Tibial artery (tissue), 4 donors: ENCODE measurements at regions of chr18 and their contacts with region 1.

Region 1: GRCh38 chr18:60100778-60101177 is 201.0 kb downstream of the PMAIP1 start:
- DNase-seq: no peak
- H3K4me3 ChIP-seq: no peak overlapping the region
- H3K27ac ChIP-seq: no peak overlapping the region
- H3K4me1 ChIP-seq: no peaks in the 10 kb centered on the region
- H3K27me3 ChIP-seq: no peaks in the 10 kb centered on the region
- CTCF ChIP-seq: no peak

Region 2: DNA sequence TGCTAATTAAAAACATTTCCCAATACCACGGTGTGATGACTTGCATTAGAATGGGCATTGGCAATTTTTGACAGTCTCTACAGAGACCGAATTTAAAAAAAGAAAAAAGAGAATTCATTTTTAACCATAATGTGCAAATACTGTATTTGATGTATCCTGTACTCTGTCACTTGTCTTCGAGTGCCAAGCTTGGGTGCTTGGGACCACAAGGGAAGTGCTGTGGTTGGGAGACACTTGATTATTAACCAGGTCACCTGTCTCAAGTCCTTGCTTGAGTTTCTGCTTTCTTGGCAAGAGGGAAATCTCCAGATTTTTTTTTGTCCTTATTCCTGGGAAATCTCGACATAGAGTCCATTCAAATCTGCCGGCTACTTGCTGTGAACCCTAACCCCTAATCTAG is 62.8 kb after region 1 on chr18:
- intact Hi-C with region 1: loop called (anchors 5 kb)
- DNase-seq: no peak
- H3K4me3 ChIP-seq: no peak overlapping the region
- H3K27ac ChIP-seq: no peak overlapping the region
- H3K4me1 ChIP-seq: no peaks in the 10 kb centered on the region
- H3K27me3 ChIP-seq: no peaks in the 10 kb centered on the region
- CTCF ChIP-seq: no peak